Stomach (tissue), 19 donors: ENCODE measurements at regions of chr2 and their contacts with region 1.

Region 1: DNA sequence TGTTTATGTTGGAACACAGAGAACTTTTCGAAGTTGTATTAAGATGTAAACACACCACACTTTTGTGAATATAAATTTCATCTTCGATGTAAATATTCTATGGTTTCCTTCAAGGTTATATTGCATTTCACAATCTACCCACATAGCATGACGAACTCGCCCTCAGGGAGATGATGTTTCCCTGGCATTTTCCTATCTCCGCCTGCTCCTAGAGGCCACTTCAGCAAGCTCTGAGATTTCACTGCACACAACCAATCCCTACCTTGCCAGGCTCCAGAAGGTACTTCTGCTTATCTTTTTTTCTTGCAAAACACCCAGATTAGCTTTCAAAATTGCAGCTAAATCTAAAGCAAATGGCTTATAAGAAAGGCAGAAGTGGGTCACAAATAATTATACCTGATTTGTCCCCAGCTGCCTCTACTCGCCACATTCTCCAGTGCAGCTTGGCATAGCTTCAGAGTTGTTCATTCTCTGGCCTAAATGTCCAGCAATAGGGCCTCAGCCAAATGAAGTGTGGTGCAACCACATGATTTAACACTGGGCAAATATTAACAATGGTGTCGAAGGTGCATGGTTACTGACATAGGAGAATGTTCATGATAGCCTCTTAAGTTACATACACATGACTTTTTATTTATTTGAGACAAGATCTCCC is 32.4 kb upstream of the MRPL19 start:
- DNase-seq: no peak
- H3K4me3 ChIP-seq: no peak overlapping the region
- H3K27ac ChIP-seq: no peak overlapping the region
- H3K4me1 ChIP-seq: peaks cover 0 to 1% (median under 1%) of the 10 kb centered on the region in 4 donors
- H3K27me3 ChIP-seq: peaks cover 0 to 24% (median 6%) of the 10 kb centered on the region in 3 donors
- CTCF ChIP-seq: no peak
- EP300 ChIP-seq: no peak
- POLR2A ChIP-seq: no peak

Region 2: DNA sequence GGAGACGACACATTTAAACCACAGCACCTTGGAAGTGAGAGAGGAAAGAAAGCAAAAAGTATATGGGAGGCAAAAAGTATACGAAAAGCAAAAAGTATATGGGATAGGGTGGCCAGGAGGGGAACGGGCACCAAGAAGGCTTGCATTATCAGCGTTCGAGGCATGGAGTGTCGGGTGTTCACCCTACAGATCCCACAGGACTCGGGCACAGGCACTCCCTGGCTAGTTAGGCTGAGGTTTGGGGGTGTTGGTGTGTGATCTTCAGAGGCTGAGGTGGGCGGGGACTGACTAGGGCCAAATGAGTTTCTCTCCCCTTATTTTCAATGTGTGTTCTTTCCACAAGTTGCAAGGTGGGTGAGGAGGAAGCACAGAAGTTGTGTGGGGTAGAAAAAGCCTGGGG is 140.1 kb before region 1 on chr2:
- intact Hi-C with region 1: loop called (anchors 5 kb)
- DNase-seq: no peak
- H3K4me3 ChIP-seq: no peak overlapping the region
- H3K27ac ChIP-seq: no peak overlapping the region
- H3K4me1 ChIP-seq: no peaks in the 10 kb centered on the region
- H3K27me3 ChIP-seq: no peaks in the 10 kb centered on the region
- CTCF ChIP-seq: no peak
- EP300 ChIP-seq: no peak
- POLR2A ChIP-seq: no peak